Gastrocnemius medialis (tissue), 4 donors: ENCODE measurements at regions of chr16 and their contacts with region 1.

Region 1: DNA sequence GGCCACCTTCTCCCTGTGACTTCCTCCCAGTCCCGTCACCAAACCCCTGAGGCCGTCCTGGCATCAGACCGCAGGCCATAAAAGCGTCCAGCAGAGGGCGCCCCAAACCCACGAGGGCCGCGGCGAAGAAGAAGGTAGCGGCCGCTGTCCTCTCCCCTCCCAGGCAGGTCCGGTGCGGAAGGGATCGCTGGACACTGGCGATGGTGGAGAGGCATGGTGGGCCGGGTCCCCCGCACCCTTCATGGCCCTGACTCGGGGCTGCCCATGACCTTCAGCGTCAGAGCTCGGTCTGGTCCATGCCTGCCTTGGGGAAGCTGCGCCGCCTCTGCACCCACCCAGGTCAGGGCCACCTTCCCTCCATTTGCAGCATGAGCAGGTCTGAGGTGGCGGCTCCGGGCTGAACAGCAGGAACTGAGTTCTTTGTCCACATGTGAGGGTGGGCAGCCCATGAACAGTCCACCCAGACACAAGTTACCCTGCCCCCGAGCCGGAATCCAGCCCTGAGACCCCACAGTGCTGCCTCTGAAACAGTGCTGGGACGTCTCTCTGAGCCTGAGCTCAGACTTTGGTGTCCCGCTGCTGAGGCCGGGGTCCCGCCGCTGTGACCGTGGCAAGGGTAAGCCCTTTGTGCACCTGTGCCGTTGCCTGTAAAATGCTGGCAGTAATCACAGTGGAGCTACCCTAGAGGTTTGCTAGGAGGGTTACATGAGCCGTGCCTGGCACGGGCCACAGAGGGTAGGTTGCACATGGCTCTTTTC is 40.8 kb upstream of the CMIP start:
- DNase-seq: peak; percentile 45 to 64
- ATAC-seq: peak; percentile 78 to 90
- H3K4me3 ChIP-seq: peak overlapping the region in 3 of 4 donors; percentile 14 to 42 (median 42)
- H3K27ac ChIP-seq: no peak overlapping the region
- H3K4me1 ChIP-seq: no peaks in the 10 kb centered on the region
- H3K27me3 ChIP-seq: peaks cover 0 to 5% (median 0%) of the 10 kb centered on the region in 3 donors
- CTCF ChIP-seq: peak; percentile 68 to 95 (median 88)
- POLR2A ChIP-seq: no peak

Region 2: GRCh38 chr16:81696961-81697615 is 293.3 kb after region 1 on chr16:
- in situ Hi-C with region 1: no loop called
- intact Hi-C with region 1: loop called (anchors 10 kb)
- DNase-seq: no peak
- ATAC-seq: no peak
- H3K4me3 ChIP-seq: no peak overlapping the region
- H3K27ac ChIP-seq: no peak overlapping the region
- H3K4me1 ChIP-seq: peaks cover 0 to 8% of the 10 kb centered on the region in 2 donors
- H3K27me3 ChIP-seq: no peaks in the 10 kb centered on the region
- CTCF ChIP-seq: peak in 4 of 5 experiments; percentile 42 to 58 (median 49)
- POLR2A ChIP-seq: no peak

Region 3: DNA sequence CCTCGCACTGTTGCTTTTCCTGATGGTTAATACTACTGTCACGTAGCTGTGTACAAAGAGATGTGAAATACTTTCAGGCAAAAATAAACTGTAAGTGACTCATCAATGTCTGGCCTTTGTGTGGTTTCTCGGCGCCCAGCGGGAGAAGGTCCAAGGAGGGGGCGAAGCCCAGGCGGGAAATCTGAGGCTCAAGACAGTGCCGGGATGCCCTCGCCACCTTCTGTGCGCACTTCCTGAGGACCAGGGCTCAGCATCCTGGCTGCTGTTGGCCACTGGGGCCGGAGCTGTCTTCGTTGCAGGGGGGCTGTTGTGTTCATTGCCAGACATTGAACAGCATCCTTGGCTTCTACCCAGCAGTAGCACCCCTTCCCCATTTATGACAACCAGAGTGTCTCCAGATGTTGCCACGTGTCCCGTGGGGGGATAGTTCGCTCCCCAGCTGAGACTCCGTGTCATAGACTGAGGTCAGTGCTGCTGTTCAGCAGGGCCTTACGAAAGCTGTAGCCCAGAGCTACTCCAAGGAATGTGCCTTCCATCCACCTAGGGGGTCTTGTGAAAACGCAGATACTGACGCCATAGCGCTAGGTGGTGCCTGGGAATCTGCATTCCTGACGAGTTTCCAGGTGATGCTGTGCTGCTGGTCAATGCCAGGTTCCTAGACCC is 308.0 kb after region 1 on chr16:
- in situ Hi-C with region 1: loop called in 1 of 4 experiments (anchors 10 kb)
- intact Hi-C with region 1: no loop called
- DNase-seq: no peak
- ATAC-seq: no peak
- H3K4me3 ChIP-seq: no peak overlapping the region
- H3K27ac ChIP-seq: no peak overlapping the region
- H3K4me1 ChIP-seq: no peaks in the 10 kb centered on the region
- H3K27me3 ChIP-seq: no peaks in the 10 kb centered on the region
- CTCF ChIP-seq: no peak
- POLR2A ChIP-seq: no peak

Region 4: GRCh38 chr16:81723098-81723723 is 319.4 kb after region 1 on chr16:
- in situ Hi-C with region 1: loop called (anchors 5 to 10 kb)
- intact Hi-C with region 1: loop called (anchors 1 kb)
- DNase-seq: no peak
- ATAC-seq: peak; percentile 83 to 87
- H3K4me3 ChIP-seq: no peak overlapping the region
- H3K27ac ChIP-seq: no peak overlapping the region
- H3K4me1 ChIP-seq: no peaks in the 10 kb centered on the region
- H3K27me3 ChIP-seq: no peaks in the 10 kb centered on the region
- CTCF ChIP-seq: peak; percentile 44 to 68 (median 62)
- POLR2A ChIP-seq: no peak

Region 5: GRCh38 chr16:81737885-81738786 is 334.3 kb after region 1 on chr16:
- in situ Hi-C with region 1: no loop called
- intact Hi-C with region 1: loop called (anchors 1 kb)
- DNase-seq: peak; percentile 38 to 47
- ATAC-seq: peak; percentile 85 to 87
- H3K4me3 ChIP-seq: peak overlapping the region in 2 of 4 donors; percentile 7 to 37
- H3K27ac ChIP-seq: no peak overlapping the region
- H3K4me1 ChIP-seq: peaks cover 3 to 6% of the 10 kb centered on the region in 2 donors
- H3K27me3 ChIP-seq: no peaks in the 10 kb centered on the region
- CTCF ChIP-seq: peak; percentile 59 to 72 (median 65)
- POLR2A ChIP-seq: no peak

Region 6: DNA sequence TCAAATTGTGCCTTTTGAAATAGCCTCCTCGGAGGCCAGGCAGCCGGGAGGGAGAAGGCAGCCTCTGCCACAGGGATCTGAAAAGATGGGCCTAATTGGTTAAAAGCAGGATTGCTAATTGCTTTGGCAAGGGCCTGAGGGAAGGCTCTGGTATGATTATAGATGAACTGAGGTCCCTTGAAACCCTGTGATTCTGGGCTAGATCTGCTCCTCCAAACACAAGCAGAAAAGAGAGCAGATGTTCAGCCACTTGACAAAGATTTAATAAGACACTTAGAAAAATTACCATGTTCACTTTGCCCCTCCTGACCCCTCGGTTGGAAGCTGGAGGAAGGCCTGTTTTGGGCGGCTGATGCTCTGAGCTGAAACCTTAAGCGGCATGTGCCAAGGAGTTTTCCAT is 975.8 kb after region 1 on chr16:
- in situ Hi-C with region 1: no loop called
- intact Hi-C with region 1: no loop called
- DNase-seq: no peak
- ATAC-seq: no peak
- H3K4me3 ChIP-seq: no peak overlapping the region
- H3K27ac ChIP-seq: no peak overlapping the region
- H3K4me1 ChIP-seq: no peaks in the 10 kb centered on the region
- H3K27me3 ChIP-seq: no peaks in the 10 kb centered on the region
- CTCF ChIP-seq: no peak
- POLR2A ChIP-seq: no peak